Naive thymus-derived CD8-positive, alpha-beta T cell (primary cell): ENCODE measurements at regions of chr9 and their contacts with region 1.

Region 1: GRCh38 chr9:94166237-94166963 is 82.1 kb downstream of the PTPDC1 start:
- DNase-seq: peak; percentile 87 to 97 (median 93)
- ATAC-seq: peak; percentile 57 to 60
- H3K4me3 Mint-ChIP-seq: peak overlapping the region; percentile 61 to 98 (median 88)
- H3K27ac Mint-ChIP-seq: peak overlapping the region; percentile 53 to 96 (median 91)
- H3K4me1 Mint-ChIP-seq: peaks cover 27 to 57% (median 56%) of the 10 kb centered on the region in 4 donors
- H3K27me3 Mint-ChIP-seq: no peaks in the 10 kb centered on the region

Region 2: GRCh38 chr9:94153905-94154304 is 12.5 kb before region 1 on chr9:
- POLR2A ChIA-PET with region 1: interaction called, 11 read pairs
- DNase-seq: peak in 3 of 10 donors; percentile 20 to 41 (median 38)
- ATAC-seq: peak; percentile 88 to 92
- H3K4me3 Mint-ChIP-seq: peak overlapping the region; percentile 43 to 76 (median 58)
- H3K27ac Mint-ChIP-seq: peak overlapping the region; percentile 54 to 95 (median 88)
- H3K4me1 Mint-ChIP-seq: peaks cover 22 to 48% (median 34%) of the 10 kb centered on the region in 4 donors
- H3K27me3 Mint-ChIP-seq: no peaks in the 10 kb centered on the region